ENCODE measurements at regions of chr4 and their contacts with region 1.

Region 1: DNA sequence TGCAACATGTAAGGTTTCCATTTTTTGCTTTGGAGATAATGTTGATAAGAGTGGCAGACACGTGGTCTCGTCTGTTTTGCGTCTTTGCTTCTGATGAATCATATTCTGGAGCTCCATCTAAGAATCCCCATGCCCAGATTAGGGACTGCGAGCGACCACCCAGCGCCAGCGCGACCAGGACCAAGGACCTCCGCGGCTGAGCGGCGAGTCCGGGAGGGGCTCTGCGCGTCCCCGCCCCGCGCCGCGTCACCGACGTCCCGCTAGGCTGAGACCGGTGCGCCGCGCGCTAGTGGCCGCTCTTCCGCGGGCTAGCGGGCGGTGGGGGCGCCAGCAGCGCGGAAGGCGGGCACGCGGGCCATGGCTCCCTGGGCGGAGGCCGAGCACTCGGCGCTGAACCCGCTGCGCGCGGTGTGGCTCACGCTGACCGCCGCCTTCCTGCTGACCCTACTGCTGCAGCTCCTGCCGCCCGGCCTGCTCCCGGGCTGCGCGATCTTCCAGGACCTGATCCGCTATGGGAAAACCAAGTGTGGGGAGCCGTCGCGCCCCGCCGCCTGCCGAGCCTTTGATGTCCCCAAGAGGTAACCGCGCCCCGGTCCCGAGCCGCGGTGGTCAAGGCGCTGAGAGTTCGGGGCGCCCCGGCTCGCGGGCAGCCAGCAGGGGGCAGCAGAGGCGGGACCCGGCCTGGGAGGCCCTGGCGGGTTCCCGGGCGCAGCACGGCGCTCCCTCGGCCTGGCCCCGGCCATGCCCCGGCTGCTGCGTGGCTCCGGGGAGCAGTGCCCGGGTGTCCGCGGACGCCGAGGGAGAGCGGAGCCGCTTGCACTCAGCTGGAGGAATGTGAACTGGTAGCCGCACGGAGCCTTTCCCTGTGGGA is at the start of gene SRD5A3:
- DNase-seq: peak; percentile 89
- ATAC-seq: peak; percentile 89
- H3K4me3 Mint-ChIP-seq: peak within 1 kb of the TSS; percentile 82
- H3K27ac Mint-ChIP-seq: peak within 1 kb of the TSS; percentile 90
- H3K4me1 Mint-ChIP-seq: peaks cover 25% of the 10 kb centered on the region
- H3K27me3 Mint-ChIP-seq: no peaks in the 10 kb centered on the region
- total RNA-seq, gene SRD5A3: 20.5 to 24.6 TPM

Region 2: DNA sequence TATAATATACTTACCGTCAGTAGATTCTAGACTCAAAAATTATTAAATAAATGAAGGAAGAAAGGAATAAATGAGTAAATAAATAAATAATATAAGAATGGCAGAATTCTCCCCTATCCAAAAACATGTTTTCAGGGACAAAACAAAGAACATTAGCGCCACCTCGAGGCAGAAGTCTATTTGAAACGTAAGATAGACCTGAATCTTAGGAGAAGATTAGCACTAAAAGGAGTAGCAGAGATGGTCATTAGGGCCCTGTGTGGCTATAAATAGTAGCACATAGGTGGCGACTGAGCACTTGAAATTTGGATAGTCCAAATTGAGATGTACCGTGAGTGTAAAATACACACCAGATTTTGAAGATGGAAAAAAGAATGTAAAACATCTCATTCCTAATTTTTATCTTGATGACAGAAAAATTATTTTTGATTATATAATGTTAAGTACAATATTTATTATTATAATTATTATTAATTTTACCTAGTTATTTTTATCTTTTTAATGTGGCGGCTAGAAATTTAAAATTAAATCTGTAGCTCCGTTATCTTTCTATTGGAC is 24.4 kb before region 1 on chr4:
- CTCF ChIA-PET with region 1: interaction called, 21 read pairs
- POLR2A ChIA-PET with region 1: no interaction called
- intact Hi-C with region 1: no loop called
- DNase-seq: peak; percentile 85
- ATAC-seq: no peak
- H3K4me3 Mint-ChIP-seq: no peak overlapping the region
- H3K27ac Mint-ChIP-seq: no peak overlapping the region
- H3K4me1 Mint-ChIP-seq: peaks cover 35% of the 10 kb centered on the region
- H3K27me3 Mint-ChIP-seq: peaks cover 2% of the 10 kb centered on the region

Region 3: GRCh38 chr4:55435141-55435841 is 89.1 kb after region 1 on chr4:
- CTCF ChIA-PET with region 1: no interaction called
- POLR2A ChIA-PET with region 1: no interaction called
- intact Hi-C with region 1: loop called in 1 of 2 experiments (anchors 2 kb)
- DNase-seq: peak; percentile 62
- ATAC-seq: peak; percentile 96
- H3K4me3 Mint-ChIP-seq: no peak overlapping the region
- H3K27ac Mint-ChIP-seq: peak overlapping the region; percentile 73
- H3K4me1 Mint-ChIP-seq: peaks cover 15% of the 10 kb centered on the region
- H3K27me3 Mint-ChIP-seq: no peaks in the 10 kb centered on the region

Region 4: DNA sequence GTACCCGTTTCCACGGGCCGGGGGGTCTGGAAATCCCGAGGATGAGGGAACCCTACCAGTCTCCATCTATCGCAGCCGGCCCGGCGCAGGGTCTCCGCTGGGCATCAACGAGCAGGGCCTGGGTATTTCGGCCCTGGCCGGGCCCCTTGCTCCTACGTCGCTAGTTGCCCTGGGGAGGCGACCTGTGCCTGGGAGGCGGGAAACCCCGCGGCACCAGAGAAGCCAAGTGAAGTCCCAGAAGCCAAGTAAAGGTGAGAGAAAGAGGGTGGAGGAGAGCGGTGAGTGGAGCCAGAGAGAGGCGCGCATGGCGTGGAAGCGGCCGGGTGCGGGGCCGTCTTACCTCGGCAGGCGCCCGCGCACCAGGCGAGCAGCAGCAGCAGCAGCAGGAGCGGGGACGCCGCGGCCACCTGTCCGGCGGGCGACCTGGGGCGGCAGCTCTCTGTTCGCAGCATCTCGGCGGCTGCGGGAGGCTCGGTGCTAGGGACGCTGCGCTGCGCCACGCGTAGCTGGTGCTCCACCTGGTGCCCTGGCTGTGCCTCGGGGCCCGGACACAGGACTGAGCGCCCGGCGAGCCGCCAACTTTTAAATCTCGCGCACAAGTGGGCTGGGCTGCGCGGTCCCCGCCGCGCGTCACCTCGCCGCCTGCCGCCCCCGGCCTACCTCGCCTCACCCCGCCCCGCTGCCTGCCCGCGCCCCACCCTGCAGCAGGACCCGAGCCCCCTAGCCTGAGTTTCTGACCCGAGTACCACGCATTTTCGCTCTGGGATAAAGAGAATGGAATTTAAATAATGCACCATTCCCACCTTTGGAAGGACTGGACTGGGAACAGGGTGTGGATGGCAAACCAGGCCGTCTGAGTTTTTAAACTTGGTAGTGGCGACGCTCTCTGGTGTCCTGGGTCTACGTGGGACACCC is 289.8 kb after region 1 on chr4 and contains the start of gene NMU:
- CTCF ChIA-PET with region 1: no interaction called
- POLR2A ChIA-PET with region 1: no interaction called
- intact Hi-C with region 1: loop called in 1 of 2 experiments (anchors 5 kb)
- DNase-seq: peak; percentile 73
- ATAC-seq: peak; percentile 90
- H3K4me3 Mint-ChIP-seq: peak within 1 kb of the TSS; percentile 47
- H3K27ac Mint-ChIP-seq: no peak within 1 kb of the TSS
- H3K4me1 Mint-ChIP-seq: peaks cover 13% of the 10 kb centered on the region
- H3K27me3 Mint-ChIP-seq: peaks cover 54% of the 10 kb centered on the region
- total RNA-seq, gene NMU: 0.30 TPM in 1 of 2 experiments, not detected in the other